ENCODE measurements at regions of chr17 and their contacts with region 1.

Region 1: GRCh38 chr17:700504-701094 is 14.0 kb downstream of the VPS53 start:
- DNase-seq: peak in 4 of 5 donors; percentile 53 to 60 (median 58)
- H3K4me3 ChIP-seq: no peak overlapping the region
- H3K4me3 Mint-ChIP-seq: no peak overlapping the region
- H3K27ac ChIP-seq: no peak overlapping the region
- H3K27ac Mint-ChIP-seq: peak overlapping the region in 2 of 7 donors; percentile 44 to 75
- H3K4me1 ChIP-seq: no peaks in the 10 kb centered on the region
- H3K4me1 Mint-ChIP-seq: peaks cover 0 to 4% (median 3%) of the 10 kb centered on the region in 4 donors
- H3K27me3 ChIP-seq: no peaks in the 10 kb centered on the region
- H3K27me3 Mint-ChIP-seq: no peaks in the 10 kb centered on the region

Region 2: GRCh38 chr17:143782-144281 is 556.8 kb before region 1 on chr17:
- CTCF ChIA-PET with region 1: interaction called, 21 read pairs
- POLR2A ChIA-PET with region 1: no interaction called
- intact Hi-C with region 1: no loop called
- DNase-seq: peak; percentile 73 to 85 (median 80)
- H3K4me3 ChIP-seq: no peak overlapping the region
- H3K4me3 Mint-ChIP-seq: peak overlapping the region in 1 of 8 donors; percentile 49
- H3K27ac ChIP-seq: no peak overlapping the region
- H3K27ac Mint-ChIP-seq: no peak overlapping the region
- H3K4me1 ChIP-seq: peaks cover 4% of the 10 kb centered on the region
- H3K4me1 Mint-ChIP-seq: peaks cover 0 to 2% (median under 1%) of the 10 kb centered on the region in 4 donors
- H3K27me3 ChIP-seq: no peaks in the 10 kb centered on the region
- H3K27me3 Mint-ChIP-seq: peaks cover 0 to 3% of the 10 kb centered on the region in 2 donors

Region 3: DNA sequence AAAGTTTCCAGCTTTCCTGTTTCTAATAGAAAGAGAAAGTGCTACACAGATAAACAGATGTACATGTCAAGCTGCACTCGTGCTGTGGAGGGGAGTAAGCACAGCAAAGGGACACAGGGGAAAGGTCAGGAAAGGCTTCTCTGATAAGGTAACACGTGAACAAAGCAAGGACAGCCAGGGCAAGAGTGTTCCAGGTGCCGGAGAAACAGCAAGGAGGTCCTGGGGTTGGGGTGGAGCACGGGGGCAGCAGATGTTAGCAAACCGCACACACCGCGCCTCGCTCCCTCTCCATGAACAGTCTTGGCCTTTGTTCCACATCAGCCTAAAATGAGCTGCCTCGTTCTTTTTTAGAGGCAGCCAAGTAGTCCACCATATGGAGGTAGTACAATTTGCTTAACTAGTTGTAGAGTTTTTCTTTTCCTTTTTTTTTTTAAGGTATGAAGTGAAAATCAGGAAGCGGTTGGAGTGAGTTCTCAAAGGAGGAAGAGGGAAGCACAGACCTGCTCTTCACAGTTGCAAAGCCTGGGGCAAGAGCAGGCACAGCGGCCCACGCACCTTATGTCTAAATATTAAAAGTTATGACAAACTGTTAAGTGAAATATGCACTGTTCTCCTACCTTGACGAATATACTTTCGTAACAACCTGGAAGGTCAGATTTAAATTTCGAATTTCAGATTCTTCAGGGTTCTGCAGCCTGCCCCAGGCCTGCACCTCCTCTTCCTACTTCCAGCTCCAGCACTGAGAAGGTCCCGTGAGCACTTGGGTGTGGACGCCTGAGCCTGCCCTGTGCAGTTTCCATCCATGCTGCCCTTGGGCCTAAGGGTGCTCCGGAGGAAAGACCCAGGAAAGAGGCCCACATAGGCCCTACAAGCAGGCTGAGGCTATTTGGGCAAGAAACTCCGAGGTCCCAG is 306.5 kb before region 1 on chr17:
- CTCF ChIA-PET with region 1: no interaction called
- POLR2A ChIA-PET with region 1: no interaction called
- intact Hi-C with region 1: loop called (anchors 10 kb)
- DNase-seq: no peak
- H3K4me3 ChIP-seq: no peak overlapping the region
- H3K4me3 Mint-ChIP-seq: no peak overlapping the region
- H3K27ac ChIP-seq: no peak overlapping the region
- H3K27ac Mint-ChIP-seq: peak overlapping the region in 4 of 7 donors; percentile 24 to 83 (median 41)
- H3K4me1 ChIP-seq: peaks cover 3% of the 10 kb centered on the region
- H3K4me1 Mint-ChIP-seq: peaks cover 0 to 4% (median 0%) of the 10 kb centered on the region in 4 donors
- H3K27me3 ChIP-seq: no peaks in the 10 kb centered on the region
- H3K27me3 Mint-ChIP-seq: no peaks in the 10 kb centered on the region

Region 4: GRCh38 chr17:416293-417206 is 284.0 kb before region 1 on chr17:
- CTCF ChIA-PET with region 1: interaction called, 182 read pairs
- POLR2A ChIA-PET with region 1: interaction called, 22 read pairs
- intact Hi-C with region 1: loop called (anchors 1 kb)
- DNase-seq: peak; percentile 58 to 71 (median 67)
- H3K4me3 ChIP-seq: peak overlapping the region; percentile 73 to 77
- H3K4me3 Mint-ChIP-seq: peak overlapping the region; percentile 86 to 98 (median 93)
- H3K27ac ChIP-seq: peak overlapping the region; percentile 70
- H3K27ac Mint-ChIP-seq: peak overlapping the region; percentile 92 to 98 (median 97)
- H3K4me1 ChIP-seq: peaks cover 88% of the 10 kb centered on the region
- H3K4me1 Mint-ChIP-seq: peaks cover 60 to 90% (median 78%) of the 10 kb centered on the region in 4 donors
- H3K27me3 ChIP-seq: no peaks in the 10 kb centered on the region
- H3K27me3 Mint-ChIP-seq: no peaks in the 10 kb centered on the region

Region 5: DNA sequence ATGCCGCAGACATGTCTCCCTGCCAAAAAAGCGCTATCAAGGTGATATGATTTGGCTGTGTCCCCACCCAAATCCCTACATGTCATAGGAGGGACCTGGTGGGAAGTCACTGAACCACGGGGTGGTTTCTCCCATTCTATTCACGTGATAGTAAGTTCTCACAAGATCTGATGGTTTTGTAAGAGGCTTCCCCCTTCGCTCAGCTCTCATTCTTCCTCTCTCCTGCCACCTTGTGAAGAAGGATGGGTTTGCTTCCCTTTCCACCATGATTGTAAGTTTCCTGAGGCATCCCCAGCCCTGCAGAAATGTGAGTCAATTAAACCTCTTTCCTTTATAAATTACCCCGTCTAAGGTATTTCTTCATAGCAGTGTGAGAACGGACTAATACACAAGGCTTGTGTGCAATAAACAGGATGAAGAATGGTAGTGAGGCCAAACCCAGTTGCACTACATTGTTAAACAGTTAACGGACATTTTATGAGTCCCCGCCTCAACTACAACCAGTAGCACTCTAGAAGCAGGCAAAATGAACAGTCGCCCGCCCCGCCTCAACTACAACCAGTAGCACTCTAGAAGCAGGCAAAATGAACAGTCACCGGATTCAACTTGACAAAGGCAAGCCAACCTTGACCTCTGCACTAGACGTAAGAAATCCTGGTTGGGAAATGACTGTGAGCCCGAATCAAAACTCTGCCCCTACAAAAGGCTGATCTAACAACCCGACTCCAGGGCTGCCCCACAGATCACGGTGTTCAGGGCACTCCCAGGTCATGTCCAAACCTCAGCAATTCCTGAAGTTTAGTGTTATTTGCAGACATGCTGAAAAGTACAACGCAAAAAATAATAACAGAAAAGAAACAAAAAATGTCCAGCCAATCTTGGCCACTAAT is 12.3 kb before region 1 on chr17:
- CTCF ChIA-PET with region 1: interaction called, 13 read pairs
- POLR2A ChIA-PET with region 1: no interaction called
- intact Hi-C with region 1: no loop called
- DNase-seq: peak in 2 of 5 donors; percentile 5 to 6
- H3K4me3 ChIP-seq: no peak overlapping the region
- H3K4me3 Mint-ChIP-seq: no peak overlapping the region
- H3K27ac ChIP-seq: no peak overlapping the region
- H3K27ac Mint-ChIP-seq: peak overlapping the region in 3 of 7 donors; percentile 48 to 79 (median 69)
- H3K4me1 ChIP-seq: no peaks in the 10 kb centered on the region
- H3K4me1 Mint-ChIP-seq: peaks cover 0 to 6% (median 3%) of the 10 kb centered on the region in 4 donors
- H3K27me3 ChIP-seq: no peaks in the 10 kb centered on the region
- H3K27me3 Mint-ChIP-seq: no peaks in the 10 kb centered on the region

Region 6: DNA sequence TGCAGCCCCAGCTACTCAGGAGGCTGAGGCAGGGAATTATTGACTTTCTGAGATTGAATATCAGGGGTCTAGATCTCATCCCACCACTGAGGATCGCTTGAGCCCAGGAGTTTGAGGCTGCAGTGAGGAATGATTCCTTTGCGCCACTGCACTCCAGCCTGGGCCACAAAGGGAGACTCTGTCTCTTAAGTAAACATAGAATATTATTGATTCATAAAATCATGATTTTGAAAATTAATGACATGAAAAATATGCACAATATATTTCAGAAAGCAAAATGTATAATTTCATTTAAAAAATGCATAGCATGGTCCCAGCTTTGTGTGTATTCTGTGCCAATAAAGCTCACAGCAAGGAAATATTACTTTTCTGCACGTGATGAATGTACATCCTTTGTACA is 15.6 kb after region 1 on chr17:
- CTCF ChIA-PET with region 1: interaction called, 13 read pairs
- POLR2A ChIA-PET with region 1: interaction called, 4 read pairs
- intact Hi-C with region 1: no loop called
- DNase-seq: no peak
- H3K4me3 ChIP-seq: no peak overlapping the region
- H3K4me3 Mint-ChIP-seq: peak overlapping the region in 5 of 8 donors; percentile 17 to 66 (median 63)
- H3K27ac ChIP-seq: no peak overlapping the region
- H3K27ac Mint-ChIP-seq: no peak overlapping the region
- H3K4me1 ChIP-seq: peaks cover 19% of the 10 kb centered on the region
- H3K4me1 Mint-ChIP-seq: peaks cover 13 to 33% (median 23%) of the 10 kb centered on the region in 4 donors
- H3K27me3 ChIP-seq: no peaks in the 10 kb centered on the region
- H3K27me3 Mint-ChIP-seq: peaks cover 0 to 2% of the 10 kb centered on the region in 2 donors

Region 7: DNA sequence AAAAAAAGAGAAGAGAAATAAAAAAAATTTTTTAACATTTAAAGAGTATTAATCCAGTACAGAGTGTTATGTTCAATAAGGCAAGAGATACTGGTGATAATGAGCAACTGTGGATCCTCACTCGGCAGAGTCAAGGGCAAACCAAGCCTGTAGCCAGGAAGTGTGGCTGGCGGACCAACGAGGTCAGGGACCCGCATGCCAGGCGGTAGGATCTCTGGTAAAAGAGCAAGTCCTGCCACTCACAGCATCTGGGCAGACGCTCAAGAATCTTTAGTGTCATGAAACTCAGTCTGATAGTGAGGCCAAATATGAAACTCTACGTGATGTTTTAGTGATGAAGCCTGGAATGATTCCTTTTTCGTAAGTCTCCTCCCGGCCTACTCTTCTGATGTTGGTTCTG is 59.8 kb after region 1 on chr17:
- CTCF ChIA-PET with region 1: no interaction called
- POLR2A ChIA-PET with region 1: no interaction called
- intact Hi-C with region 1: no loop called
- DNase-seq: no peak
- H3K4me3 ChIP-seq: no peak overlapping the region
- H3K4me3 Mint-ChIP-seq: no peak overlapping the region
- H3K27ac ChIP-seq: no peak overlapping the region
- H3K27ac Mint-ChIP-seq: no peak overlapping the region
- H3K4me1 ChIP-seq: no peaks in the 10 kb centered on the region
- H3K4me1 Mint-ChIP-seq: peaks cover 0 to 2% (median under 1%) of the 10 kb centered on the region in 4 donors
- H3K27me3 ChIP-seq: no peaks in the 10 kb centered on the region
- H3K27me3 Mint-ChIP-seq: no peaks in the 10 kb centered on the region

Region 8: DNA sequence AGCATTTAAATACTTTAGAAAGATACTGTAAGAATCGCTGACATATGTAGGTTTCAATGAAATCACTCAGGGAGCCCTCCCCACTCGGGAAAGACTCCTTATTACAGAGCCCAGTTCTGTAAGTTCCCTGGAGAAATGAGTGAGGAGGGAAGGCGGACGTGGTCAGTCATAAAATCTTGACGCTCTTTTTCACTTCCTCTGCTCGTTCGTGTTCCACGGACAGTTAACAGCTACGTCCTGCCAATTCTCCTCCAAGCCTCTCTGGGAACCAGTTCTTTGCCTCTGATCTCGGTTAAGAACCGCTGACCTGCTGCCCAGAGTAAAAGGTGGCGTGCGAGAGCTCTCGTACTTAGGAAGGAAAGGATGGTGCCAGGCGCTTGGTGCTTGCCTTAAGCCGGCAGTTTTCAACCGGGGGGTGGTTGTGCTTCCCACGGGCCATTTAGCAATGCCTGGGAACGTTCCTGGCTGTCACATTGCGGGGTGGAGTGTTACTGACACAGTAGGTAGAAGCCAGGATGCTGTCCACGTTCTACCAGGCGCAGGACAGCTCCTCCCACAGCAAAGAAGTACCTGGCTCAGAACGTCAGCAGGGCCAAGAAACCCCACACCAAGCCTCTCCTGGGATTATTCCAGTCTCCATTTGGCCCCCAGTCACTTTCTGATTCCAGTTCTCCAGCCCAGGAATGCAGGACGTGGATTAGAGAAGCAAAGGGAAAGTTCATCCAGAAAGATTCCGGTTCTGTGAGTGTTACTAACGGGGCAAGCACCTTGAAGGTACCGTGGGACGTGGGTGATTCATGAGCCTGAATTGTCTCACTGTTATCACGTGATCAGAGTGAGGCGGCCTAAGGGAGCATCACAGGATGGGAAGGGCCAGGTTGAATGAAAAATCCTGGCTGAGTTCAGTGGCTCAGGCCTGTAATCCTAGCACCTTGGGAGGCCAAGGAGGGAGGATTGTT is 169.2 kb after region 1 on chr17:
- CTCF ChIA-PET with region 1: no interaction called
- POLR2A ChIA-PET with region 1: no interaction called
- intact Hi-C with region 1: no loop called
- DNase-seq: no peak
- H3K4me3 ChIP-seq: no peak overlapping the region
- H3K4me3 Mint-ChIP-seq: no peak overlapping the region
- H3K27ac ChIP-seq: no peak overlapping the region
- H3K27ac Mint-ChIP-seq: no peak overlapping the region
- H3K4me1 ChIP-seq: no peaks in the 10 kb centered on the region
- H3K4me1 Mint-ChIP-seq: peaks cover 0 to 5% (median 4%) of the 10 kb centered on the region in 4 donors
- H3K27me3 ChIP-seq: no peaks in the 10 kb centered on the region
- H3K27me3 Mint-ChIP-seq: peaks cover 16 to 25% of the 10 kb centered on the region in 2 donors

Measured in CD4-positive, alpha-beta memory T cell (primary cell).